ENCODE measurements at regions of chr2 and their contacts with region 1.

Region 1: DNA sequence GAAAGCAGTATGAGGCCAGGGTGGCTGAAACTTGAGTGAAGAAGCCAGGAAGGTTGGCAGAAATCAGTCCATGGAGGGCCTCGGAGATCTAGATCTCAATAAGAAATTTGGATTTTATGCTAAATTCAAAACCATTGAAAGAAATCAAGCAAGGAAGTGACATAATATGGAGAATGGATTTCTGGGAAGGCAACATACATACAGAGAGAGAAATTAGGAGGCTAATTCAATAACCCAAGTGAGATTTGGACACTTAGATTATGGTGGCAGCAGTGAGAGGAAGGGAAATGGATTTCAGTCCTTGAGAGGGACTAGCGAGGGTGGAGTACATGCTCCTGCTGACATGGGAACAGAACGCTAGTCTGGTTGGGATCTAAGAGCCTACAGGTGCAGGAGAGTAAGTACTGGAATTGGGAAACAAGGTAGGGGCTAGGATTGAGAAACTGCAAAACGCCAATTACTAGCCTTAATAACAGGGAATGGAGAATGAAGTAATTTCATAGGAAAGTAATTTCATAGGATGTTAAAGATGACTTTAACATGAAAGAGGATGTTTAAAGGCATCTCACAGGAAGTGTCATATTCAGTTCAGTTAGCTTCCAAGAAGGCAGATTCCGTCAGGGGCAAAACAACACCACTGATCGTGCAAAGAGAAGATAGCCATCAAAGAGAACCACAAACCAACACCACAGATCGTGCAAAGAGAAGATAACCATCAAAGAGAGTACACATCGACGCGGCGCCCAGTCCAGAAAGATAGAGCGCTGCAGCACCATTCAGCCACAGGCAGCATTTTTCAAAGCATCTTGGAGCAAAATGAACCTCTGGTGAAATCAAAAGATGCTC is 27.2 kb downstream of the CDKL4 start:
- DNase-seq: no peak
- H3K4me3 ChIP-seq: no peak overlapping the region
- H3K27ac ChIP-seq: no peak overlapping the region
- H3K4me1 ChIP-seq: no peaks in the 10 kb centered on the region
- H3K27me3 ChIP-seq: no peaks in the 10 kb centered on the region
- CTCF ChIP-seq: no peak

Region 2: GRCh38 chr2:39059366-39059952 is 157.1 kb before region 1 on chr2:
- dilution Hi-C with region 1: loop called (anchors 25 kb)
- DNase-seq: no peak
- H3K4me3 ChIP-seq: no peak overlapping the region
- H3K27ac ChIP-seq: no peak overlapping the region
- H3K4me1 ChIP-seq: no peaks in the 10 kb centered on the region
- H3K27me3 ChIP-seq: no peaks in the 10 kb centered on the region
- CTCF ChIP-seq: peak in 2 of 3 experiments; percentile 35 to 49